Right ventricle myocardium superior (tissue), 1 donor: ENCODE measurements at regions of chr17 and their contacts with region 1.

Region 1: GRCh38 chr17:40303009-40303657 is 5.8 kb upstream of the RARA start:
- DNase-seq: no peak
- ATAC-seq: peak; percentile 74

Region 2: DNA sequence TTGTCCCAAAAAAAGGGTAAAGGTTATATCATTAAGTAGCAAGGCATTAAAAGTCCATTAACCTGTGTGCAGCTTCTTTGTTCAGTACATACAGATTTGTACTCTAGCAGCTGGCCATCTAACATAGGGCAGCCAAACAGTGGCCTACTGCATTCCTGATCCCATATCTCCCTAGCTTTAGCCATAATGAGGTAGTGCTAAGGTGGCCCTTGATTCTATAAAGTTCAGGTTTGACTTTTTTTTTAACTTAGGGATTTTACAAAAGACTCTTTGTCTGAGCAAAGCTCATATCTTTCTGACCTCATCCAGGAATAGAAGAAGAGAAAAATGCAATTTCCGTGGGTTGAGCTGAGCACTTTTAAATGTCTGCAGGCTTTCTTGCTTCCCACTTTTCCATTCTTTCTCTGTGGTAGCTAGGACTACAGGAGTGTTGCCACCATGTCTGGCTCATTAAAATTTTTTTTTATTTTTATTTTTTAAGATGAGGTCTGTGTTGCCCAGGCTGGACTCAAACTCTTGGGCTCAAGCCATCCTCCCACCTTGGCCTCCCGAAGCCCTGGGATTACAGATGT is 34.9 kb before region 1 on chr17:
- intact Hi-C with region 1: no loop called
- DNase-seq: no peak
- ATAC-seq: no peak

Region 3: DNA sequence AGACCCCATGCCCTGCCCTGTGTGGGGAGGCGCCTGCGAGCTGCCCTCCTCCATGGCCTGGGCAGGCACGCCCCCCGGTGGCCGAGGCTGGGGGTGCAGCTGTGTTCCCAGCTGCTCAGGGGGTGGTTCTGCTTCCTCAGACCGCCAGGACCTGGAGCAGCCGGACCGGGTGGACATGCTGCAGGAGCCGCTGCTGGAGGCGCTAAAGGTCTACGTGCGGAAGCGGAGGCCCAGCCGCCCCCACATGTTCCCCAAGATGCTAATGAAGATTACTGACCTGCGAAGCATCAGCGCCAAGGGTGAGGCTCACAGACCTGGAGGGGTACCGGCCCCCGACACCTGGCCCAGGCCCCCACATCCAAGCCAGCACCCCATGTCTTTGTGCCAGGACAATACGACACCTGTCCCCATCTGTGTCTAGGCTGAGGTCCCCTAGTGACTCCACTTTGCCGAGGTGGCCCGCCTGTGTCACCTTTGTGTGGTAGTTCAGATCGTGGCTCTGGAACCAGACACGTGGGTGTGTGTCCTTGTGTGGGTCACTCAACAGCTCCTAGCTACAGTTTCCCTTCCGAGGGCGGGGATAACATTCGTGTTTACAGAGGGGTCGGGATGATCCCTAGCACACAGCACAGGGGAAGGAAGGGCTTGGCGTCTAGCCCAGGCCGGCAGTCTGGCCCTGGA is 52.1 kb after region 1 on chr17:
- intact Hi-C with region 1: loop called (anchors 2 kb)
- DNase-seq: peak; percentile 86
- ATAC-seq: peak; percentile 75

Region 4: DNA sequence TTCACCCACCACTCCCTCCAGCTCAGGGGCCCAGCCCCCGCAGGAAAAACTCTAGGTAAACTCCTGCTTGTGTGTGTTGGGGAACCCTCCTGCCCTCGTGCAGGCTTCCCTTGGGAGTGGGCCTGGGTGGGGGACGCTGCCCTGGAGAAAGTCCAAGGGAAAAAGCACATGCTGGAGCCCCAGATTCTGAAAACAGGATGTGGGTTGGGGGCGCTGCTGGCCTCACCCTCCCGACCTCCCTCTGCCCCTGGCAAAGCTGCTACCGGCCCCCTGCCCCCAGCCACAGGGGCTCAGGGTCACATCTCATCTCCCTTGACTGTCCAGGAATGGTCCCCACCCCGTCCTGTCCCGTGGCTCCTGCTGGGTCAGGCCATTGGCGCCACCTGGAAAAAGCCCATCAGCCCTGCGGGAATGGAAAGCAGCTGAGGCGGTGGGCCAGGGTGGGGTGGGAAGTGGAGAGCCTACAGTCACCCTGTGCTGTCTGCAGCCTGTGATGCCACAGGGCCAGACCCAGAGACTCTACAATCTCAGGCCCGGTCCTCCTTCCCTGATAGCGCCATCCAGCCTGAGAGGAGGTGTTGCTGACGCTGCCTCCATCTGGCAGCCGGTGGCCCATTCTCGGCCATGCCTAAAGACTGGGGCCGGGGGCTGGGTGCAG is 63.9 kb after region 1 on chr17:
- intact Hi-C with region 1: no loop called
- DNase-seq: no peak
- ATAC-seq: no peak

Region 5: GRCh38 chr17:40378966-40379365 is 75.8 kb after region 1 on chr17:
- intact Hi-C with region 1: no loop called
- DNase-seq: no peak
- ATAC-seq: no peak

Region 6: DNA sequence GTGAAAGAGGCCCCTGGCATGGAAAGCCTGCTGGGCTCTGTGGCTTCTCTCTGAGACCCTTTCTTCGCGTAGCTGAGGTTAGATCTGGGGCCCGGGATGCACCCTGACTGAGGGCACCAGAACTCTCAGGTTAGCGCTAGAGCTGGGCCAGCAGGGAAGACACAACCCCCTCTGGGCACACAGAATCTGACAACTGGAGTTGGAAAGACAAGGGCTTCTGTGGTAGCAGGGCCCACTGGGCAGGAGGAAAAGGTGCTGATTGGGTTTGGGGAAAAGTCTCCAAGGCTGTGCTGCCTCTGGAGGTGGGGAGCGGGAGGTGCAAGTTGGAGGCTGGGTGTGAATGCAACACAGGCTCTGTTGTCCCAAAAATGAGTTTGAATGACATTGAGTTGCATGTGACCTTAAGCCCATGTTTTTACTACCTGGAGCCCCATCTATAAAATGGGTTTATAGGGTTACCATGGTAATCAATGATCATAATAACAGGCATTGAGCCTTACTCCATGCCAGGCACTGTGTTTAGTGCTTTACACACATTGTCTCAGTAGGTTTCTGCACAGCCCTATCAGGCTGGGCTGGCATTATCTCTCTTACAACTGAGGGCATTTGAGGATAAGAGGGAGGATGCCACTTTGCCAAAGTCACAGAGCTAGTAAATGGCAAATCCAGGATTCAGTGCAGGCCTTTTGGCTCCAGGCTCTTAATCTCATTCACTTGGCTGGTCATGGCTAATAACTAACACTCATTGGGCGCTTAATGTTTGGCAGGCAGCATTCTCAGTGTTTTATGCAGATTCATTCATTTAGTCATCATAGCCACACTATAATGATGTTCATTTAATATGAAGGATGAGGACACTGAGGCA is 130.7 kb after region 1 on chr17:
- intact Hi-C with region 1: no loop called
- DNase-seq: no peak
- ATAC-seq: peak; percentile 26

Region 7: GRCh38 chr17:40559954-40560591 is 256.9 kb after region 1 on chr17:
- intact Hi-C with region 1: loop called (anchors 10 kb)
- DNase-seq: peak; percentile 91
- ATAC-seq: peak; percentile 89